ENCODE measurements at regions of chr3 and their contacts with region 1.

Region 1: GRCh38 chr3:11770477-11771391 is 76.0 kb downstream of the TAMM41 start:
- DNase-seq: peak; percentile 83 to 92 (median 88)
- H3K4me3 ChIP-seq: peak overlapping the region; percentile 4 to 25
- H3K4me3 Mint-ChIP-seq: peak overlapping the region; percentile 37 to 89 (median 61)
- H3K27ac ChIP-seq: peak overlapping the region; percentile 36
- H3K27ac Mint-ChIP-seq: peak overlapping the region; percentile 58 to 94 (median 82)
- H3K4me1 ChIP-seq: peaks cover 18% of the 10 kb centered on the region
- H3K4me1 Mint-ChIP-seq: peaks cover 10 to 25% (median 16%) of the 10 kb centered on the region in 4 donors
- H3K27me3 ChIP-seq: no peaks in the 10 kb centered on the region
- H3K27me3 Mint-ChIP-seq: no peaks in the 10 kb centered on the region

Region 2: GRCh38 chr3:11335056-11335608 is 435.6 kb before region 1 on chr3:
- CTCF ChIA-PET with region 1: no interaction called
- POLR2A ChIA-PET with region 1: no interaction called
- intact Hi-C with region 1: no loop called
- DNase-seq: peak; percentile 34 to 53 (median 51)
- H3K4me3 ChIP-seq: no peak overlapping the region
- H3K4me3 Mint-ChIP-seq: no peak overlapping the region
- H3K27ac ChIP-seq: no peak overlapping the region
- H3K27ac Mint-ChIP-seq: peak overlapping the region in 2 of 7 donors; percentile 30 to 39
- H3K4me1 ChIP-seq: no peaks in the 10 kb centered on the region
- H3K4me1 Mint-ChIP-seq: peaks cover 0 to 3% (median 2%) of the 10 kb centered on the region in 4 donors
- H3K27me3 ChIP-seq: no peaks in the 10 kb centered on the region
- H3K27me3 Mint-ChIP-seq: no peaks in the 10 kb centered on the region

Region 3: GRCh38 chr3:11548721-11549131 is 222.0 kb before region 1 on chr3:
- CTCF ChIA-PET with region 1: no interaction called
- POLR2A ChIA-PET with region 1: no interaction called
- intact Hi-C with region 1: no loop called
- DNase-seq: no peak
- H3K4me3 ChIP-seq: no peak overlapping the region
- H3K4me3 Mint-ChIP-seq: no peak overlapping the region
- H3K27ac ChIP-seq: no peak overlapping the region
- H3K27ac Mint-ChIP-seq: peak overlapping the region in 2 of 7 donors; percentile 41 to 46
- H3K4me1 ChIP-seq: no peaks in the 10 kb centered on the region
- H3K4me1 Mint-ChIP-seq: peaks cover 0 to 13% (median 8%) of the 10 kb centered on the region in 4 donors
- H3K27me3 ChIP-seq: no peaks in the 10 kb centered on the region
- H3K27me3 Mint-ChIP-seq: no peaks in the 10 kb centered on the region

Region 4: GRCh38 chr3:11719406-11720230 is 51.1 kb before region 1 on chr3:
- CTCF ChIA-PET with region 1: no interaction called
- POLR2A ChIA-PET with region 1: interaction called, 7 read pairs
- intact Hi-C with region 1: loop called (anchors 1 kb)
- DNase-seq: peak; percentile 76 to 87 (median 78)
- H3K4me3 ChIP-seq: peak overlapping the region in 1 of 2 donors; percentile 59
- H3K4me3 Mint-ChIP-seq: peak overlapping the region; percentile 64 to 97 (median 84)
- H3K27ac ChIP-seq: peak overlapping the region; percentile 64
- H3K27ac Mint-ChIP-seq: peak overlapping the region in 2 of 7 donors; percentile 59 to 70
- H3K4me1 ChIP-seq: peaks cover 14% of the 10 kb centered on the region
- H3K4me1 Mint-ChIP-seq: peaks cover 10 to 32% (median 23%) of the 10 kb centered on the region in 4 donors
- H3K27me3 ChIP-seq: no peaks in the 10 kb centered on the region
- H3K27me3 Mint-ChIP-seq: peaks cover 0 to 4% of the 10 kb centered on the region in 2 donors

Region 5: GRCh38 chr3:11785024-11785377 is 14.3 kb after region 1 on chr3:
- CTCF ChIA-PET with region 1: interaction called, 4 read pairs
- POLR2A ChIA-PET with region 1: interaction called, 12 read pairs
- intact Hi-C with region 1: no loop called
- DNase-seq: peak; percentile 45 to 60 (median 55)
- H3K4me3 ChIP-seq: no peak overlapping the region
- H3K4me3 Mint-ChIP-seq: peak overlapping the region; percentile 68 to 90 (median 82)
- H3K27ac ChIP-seq: no peak overlapping the region
- H3K27ac Mint-ChIP-seq: peak overlapping the region; percentile 81 to 98 (median 94)
- H3K4me1 ChIP-seq: peaks cover 21% of the 10 kb centered on the region
- H3K4me1 Mint-ChIP-seq: peaks cover 8 to 26% (median 18%) of the 10 kb centered on the region in 4 donors
- H3K27me3 ChIP-seq: no peaks in the 10 kb centered on the region
- H3K27me3 Mint-ChIP-seq: no peaks in the 10 kb centered on the region

Measured in CD4-positive, alpha-beta memory T cell (primary cell).